Left colon (tissue), 2 donors: ENCODE measurements at regions of chr9 and their contacts with region 1.

Region 1: GRCh38 chr9:76810377-76810957 is 46.2 kb downstream of the PCA3 start:
- DNase-seq: peak in 1 of 2 donors; percentile 50
- ATAC-seq: peak; percentile 93

Region 2: GRCh38 chr9:76901801-76902200 is 91.3 kb after region 1 on chr9:
- intact Hi-C with region 1: no loop called
- DNase-seq: peak in 1 of 2 donors; percentile 26
- ATAC-seq: no peak

Region 3: DNA sequence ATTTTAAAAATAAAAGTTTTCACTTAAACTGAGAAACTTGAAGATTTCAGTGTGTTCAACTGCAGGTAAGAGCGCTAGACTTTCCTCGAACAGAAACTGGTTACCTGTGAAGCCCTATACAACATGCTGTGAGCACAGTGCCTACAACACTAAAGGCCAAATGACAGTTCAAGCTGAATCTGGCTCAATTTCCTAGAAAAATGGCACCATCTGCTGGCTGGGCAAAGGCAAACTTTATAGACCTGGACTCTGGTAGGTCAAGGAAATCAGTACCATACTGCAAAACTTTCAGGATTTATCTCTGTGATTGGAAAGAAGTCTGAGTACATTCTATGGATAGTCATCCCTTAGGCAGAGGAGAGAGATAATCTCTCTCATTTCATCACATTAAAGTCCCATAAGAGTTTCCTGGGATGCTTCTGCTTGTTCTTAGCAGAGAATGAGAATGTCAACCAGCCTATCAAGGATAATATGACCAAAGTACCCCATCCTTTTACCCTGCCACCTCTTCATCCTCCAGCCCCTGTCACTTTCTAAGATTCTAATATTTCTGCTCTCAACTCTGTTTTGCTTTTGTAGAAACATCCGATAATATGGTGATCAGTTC is 177.2 kb after region 1 on chr9:
- intact Hi-C with region 1: loop called in 1 of 2 experiments (anchors 5 kb)
- DNase-seq: peak; percentile 41 to 42
- ATAC-seq: peak; percentile 98

Region 4: GRCh38 chr9:77158772-77159513 is 348.5 kb after region 1 on chr9:
- intact Hi-C with region 1: loop called in 1 of 2 experiments (anchors 10 kb)
- DNase-seq: no peak
- ATAC-seq: no peak